Sigmoid colon (tissue), 7 donors: ENCODE measurements at regions of chr12 and their contacts with region 1.

Region 1: DNA sequence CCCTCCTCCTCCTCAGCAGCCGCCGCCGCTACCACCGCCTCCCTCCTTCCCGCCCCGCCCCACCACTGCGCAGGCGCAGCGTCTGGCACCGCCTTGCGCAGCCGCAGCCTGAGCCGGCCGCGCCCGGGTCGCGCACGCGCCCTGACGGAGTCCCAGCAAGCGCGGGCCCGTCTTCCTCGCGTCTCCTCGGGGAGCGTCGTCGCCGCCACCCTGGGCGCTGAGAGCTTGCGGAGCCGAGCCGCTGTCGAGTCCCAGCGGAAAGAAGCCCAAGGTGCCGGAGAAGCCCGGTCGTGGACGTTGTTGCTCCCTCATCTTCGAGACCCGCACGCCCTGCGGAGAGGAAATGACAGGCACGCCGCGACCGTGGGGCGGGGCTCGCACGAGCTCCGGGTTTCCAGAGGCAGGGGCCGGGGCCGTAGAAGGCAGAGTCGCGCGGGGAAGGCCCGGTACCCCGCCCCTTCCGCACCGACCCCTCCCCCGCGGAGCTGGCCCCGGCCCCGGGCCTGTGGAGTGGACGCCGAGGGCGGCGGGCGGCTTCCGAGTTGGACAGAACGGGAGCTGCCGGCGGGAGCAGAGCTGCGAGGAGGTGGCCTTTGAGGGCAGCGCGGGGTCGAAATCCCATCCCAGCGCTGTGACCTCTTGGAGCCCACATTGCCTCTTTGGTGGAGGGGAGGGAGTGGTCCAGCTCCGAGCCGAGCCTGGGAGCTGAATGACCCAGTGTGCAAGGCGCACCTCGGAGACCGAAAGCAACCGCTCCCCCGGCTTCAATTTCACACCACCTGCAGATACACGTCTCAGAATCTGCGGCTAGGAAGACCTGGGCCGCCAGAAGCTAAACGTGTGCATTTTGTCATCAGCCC is 469 bp upstream of the RAB35 start:
- DNase-seq: peak; percentile 97
- H3K4me3 ChIP-seq: peak overlapping the region; percentile 78 to 95 (median 80)
- H3K27ac ChIP-seq: peak overlapping the region; percentile 97 to 98 (median 97)
- H3K4me1 ChIP-seq: peaks cover 0 to 65% (median 43%) of the 10 kb centered on the region in 4 donors
- H3K27me3 ChIP-seq: no peaks in the 10 kb centered on the region
- CTCF ChIP-seq: no peak
- EP300 ChIP-seq: no peak
- POLR2A ChIP-seq: peak; percentile 40 to 59

Region 2: DNA sequence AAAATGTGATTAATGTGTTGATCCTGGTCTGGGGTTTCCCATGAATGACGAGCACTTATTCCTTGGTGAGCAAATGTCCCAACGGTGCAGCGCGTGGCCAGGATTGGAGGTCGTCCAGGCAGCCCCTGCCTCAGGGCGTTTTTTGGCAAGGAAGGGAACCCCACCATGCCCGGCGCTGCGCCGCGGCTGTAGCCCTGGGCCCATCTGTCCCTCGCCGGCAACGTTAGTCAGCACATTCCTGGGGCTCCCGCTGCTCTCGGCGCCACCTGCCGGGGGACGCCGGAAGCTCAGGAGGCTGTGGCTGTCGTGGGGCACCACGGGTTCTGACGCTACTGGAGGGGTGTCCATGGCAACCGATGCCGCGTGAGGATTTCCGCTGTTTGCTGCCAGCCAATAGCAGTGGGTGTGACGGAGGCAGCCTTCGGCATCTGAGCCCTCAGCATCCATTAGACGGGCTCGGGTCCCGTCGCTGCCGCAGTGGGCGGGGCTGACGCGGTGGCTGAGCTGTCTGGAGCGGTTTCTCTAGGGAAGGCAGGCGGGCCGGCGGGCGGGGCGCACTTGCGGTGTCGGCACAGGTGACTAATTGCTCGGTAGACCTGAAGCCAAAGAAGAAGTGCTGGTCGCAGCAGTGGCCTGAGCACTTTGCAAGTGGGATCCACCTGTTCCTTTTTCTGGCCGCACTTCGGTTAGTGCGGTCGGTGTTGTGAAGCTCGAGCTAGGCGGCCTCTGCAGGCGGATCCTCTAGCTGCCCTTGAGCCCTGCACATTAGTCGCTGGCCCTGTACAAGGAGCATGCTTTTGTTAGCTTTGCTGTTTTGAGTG is 30.0 kb before region 1 on chr12:
- intact Hi-C with region 1: loop called (anchors 2 kb)
- DNase-seq: peak; percentile 99
- H3K4me3 ChIP-seq: peak overlapping the region; percentile 13 to 49 (median 42)
- H3K27ac ChIP-seq: peak overlapping the region; percentile 66 to 82 (median 70)
- H3K4me1 ChIP-seq: peaks cover 0 to 14% (median 13%) of the 10 kb centered on the region in 4 donors
- H3K27me3 ChIP-seq: no peaks in the 10 kb centered on the region
- CTCF ChIP-seq: peak; percentile 92 to 97 (median 96)
- EP300 ChIP-seq: peak in 2 of 4 donors; percentile 63 to 94
- POLR2A ChIP-seq: no peak

Region 3: GRCh38 chr12:120199595-120200306 is 82.7 kb after region 1 on chr12:
- intact Hi-C with region 1: loop called (anchors 5 kb)
- DNase-seq: peak; percentile 85
- H3K4me3 ChIP-seq: peak overlapping the region; percentile 76 to 98 (median 84)
- H3K27ac ChIP-seq: peak overlapping the region; percentile 85 to 95 (median 86)
- H3K4me1 ChIP-seq: peaks cover 0 to 36% (median 30%) of the 10 kb centered on the region in 4 donors
- H3K27me3 ChIP-seq: no peaks in the 10 kb centered on the region
- CTCF ChIP-seq: no peak
- EP300 ChIP-seq: peak in 1 of 4 donors; percentile 9
- POLR2A ChIP-seq: no peak

Region 4: GRCh38 chr12:120234643-120235368 is 117.8 kb after region 1 on chr12:
- intact Hi-C with region 1: no loop called
- DNase-seq: peak; percentile 97
- H3K4me3 ChIP-seq: peak overlapping the region in 1 of 4 donors; percentile 6
- H3K27ac ChIP-seq: peak overlapping the region; percentile 89 to 95 (median 92)
- H3K4me1 ChIP-seq: peaks cover 0 to 100% (median 100%) of the 10 kb centered on the region in 4 donors
- H3K27me3 ChIP-seq: no peaks in the 10 kb centered on the region
- CTCF ChIP-seq: peak in 3 of 4 experiments; percentile 30 to 43 (median 36)
- EP300 ChIP-seq: peak in 2 of 4 donors; percentile 9 to 67
- POLR2A ChIP-seq: no peak